ENCODE measurements at regions of chr1 and their contacts with region 1.

Region 1: GRCh38 chr1:21294266-21294989 is 4.2 kb upstream of the ECE1 start:
- DNase-seq: peak; percentile 73
- CTCF ChIP-seq: no peak

Region 2: GRCh38 chr1:21216835-21217811 is 77.3 kb before region 1 on chr1:
- CTCF ChIA-PET with region 1: no interaction called
- POLR2A ChIA-PET with region 1: no interaction called
- DNase-seq: peak; percentile 75
- CTCF ChIP-seq: peak; percentile 75

Region 3: GRCh38 chr1:21313203-21313885 is 18.9 kb after region 1 on chr1:
- CTCF ChIA-PET with region 1: interaction called, 16 read pairs
- POLR2A ChIA-PET with region 1: interaction called, 6 read pairs
- DNase-seq: no peak
- CTCF ChIP-seq: no peak

Region 4: GRCh38 chr1:21324368-21325141 is 30.1 kb after region 1 on chr1:
- CTCF ChIA-PET with region 1: interaction called, 19 read pairs
- POLR2A ChIA-PET with region 1: interaction called, 8 read pairs
- DNase-seq: peak; percentile 76
- CTCF ChIP-seq: no peak

Region 5: DNA sequence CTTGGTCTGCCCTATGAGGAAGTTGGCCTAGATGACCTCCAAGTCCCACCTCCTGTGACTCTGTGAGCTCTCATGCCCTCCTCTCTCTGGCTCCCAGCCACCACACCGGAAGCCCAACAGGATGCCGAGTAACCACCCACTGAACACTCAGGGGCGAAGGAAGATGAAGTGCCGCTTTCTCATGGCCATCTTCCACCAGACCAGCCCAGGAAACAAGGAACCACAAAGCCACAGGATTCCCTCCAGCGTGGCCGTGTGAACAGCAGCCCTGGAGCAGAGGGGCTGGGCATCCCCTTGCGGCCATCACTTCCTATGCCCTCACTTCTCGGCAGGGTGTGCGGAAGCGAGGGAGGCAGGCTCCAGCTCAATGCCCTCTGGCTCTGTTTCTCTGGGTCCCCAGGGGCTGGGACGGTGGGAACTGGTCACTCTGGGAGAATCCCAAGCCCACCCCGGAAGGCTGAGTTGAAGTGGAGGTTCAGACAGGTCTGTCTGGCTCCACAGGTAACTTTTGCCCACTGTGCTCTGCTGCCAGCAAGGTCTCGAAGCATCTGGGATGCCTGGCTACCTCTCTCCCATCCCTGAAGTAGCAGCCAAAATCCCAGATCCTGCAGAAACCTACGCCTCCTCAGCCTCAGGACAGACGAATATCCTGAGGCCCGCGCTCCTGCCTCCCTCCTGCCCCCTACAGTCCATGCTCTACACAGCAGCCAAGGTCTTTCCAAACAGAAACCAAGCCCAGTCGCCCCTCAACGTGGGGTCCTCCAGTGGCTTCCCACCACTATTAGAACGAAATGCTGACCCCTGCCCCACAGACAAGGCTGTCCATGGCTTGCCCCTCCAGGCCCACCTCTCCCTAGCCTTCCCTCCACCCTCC is 40.0 kb after region 1 on chr1:
- CTCF ChIA-PET with region 1: interaction called, 15 read pairs
- POLR2A ChIA-PET with region 1: interaction called, 5 read pairs
- DNase-seq: peak; percentile 78
- CTCF ChIP-seq: peak; percentile 79

Measured in GM10248 (cell line).